Activated B cell treated with CpG ODN at 0.5 μM for 24 hours (primary cell): ENCODE measurements at regions of chr11 and their contacts with region 1.

Region 1: GRCh38 chr11:62427630-62428233 is 8.9 kb downstream of the SCGB1A1 start:
- DNase-seq: no peak
- ATAC-seq: peak; percentile 23
- H3K4me3 Mint-ChIP-seq: peak overlapping the region; percentile 25
- H3K27ac Mint-ChIP-seq: peak overlapping the region; percentile 57
- H3K4me1 Mint-ChIP-seq: peaks cover 24% of the 10 kb centered on the region
- H3K27me3 Mint-ChIP-seq: peaks cover 2% of the 10 kb centered on the region
- CTCF ChIP-seq: no peak

Region 2: DNA sequence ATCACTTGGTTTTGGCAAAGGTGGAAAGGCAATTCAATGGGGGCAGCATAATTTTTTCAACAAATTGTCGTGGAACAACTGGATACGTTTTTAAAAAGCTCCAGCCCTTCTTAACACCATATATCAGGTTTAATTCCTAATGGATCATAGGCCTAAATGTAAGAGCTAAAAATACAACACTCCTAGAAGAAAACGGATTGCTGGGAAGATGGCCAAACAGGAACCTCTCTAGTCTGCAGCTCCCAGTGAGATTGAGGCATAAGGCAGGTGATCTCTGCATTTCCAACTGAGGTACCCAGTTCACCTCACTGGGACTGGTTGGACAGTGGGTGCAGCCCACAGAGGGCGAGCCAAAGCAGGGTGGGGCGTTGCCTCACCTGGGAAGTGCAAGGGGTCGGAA is 270.1 kb before region 1 on chr11:
- CTCF ChIA-PET with region 1: no interaction called
- POLR2A ChIA-PET with region 1: no interaction called
- intact Hi-C with region 1: no loop called
- DNase-seq: no peak
- ATAC-seq: no peak
- H3K4me3 Mint-ChIP-seq: no peak overlapping the region
- H3K27ac Mint-ChIP-seq: no peak overlapping the region
- H3K4me1 Mint-ChIP-seq: no peaks in the 10 kb centered on the region
- H3K27me3 Mint-ChIP-seq: peaks cover 12% of the 10 kb centered on the region
- CTCF ChIP-seq: no peak

Region 3: GRCh38 chr11:62444236-62444833 is 16.6 kb after region 1 on chr11:
- CTCF ChIA-PET with region 1: interaction called, 30 read pairs
- POLR2A ChIA-PET with region 1: interaction called, 9 read pairs
- intact Hi-C with region 1: no loop called
- DNase-seq: peak; percentile 58
- ATAC-seq: peak; percentile 86
- H3K4me3 Mint-ChIP-seq: peak overlapping the region; percentile 83
- H3K27ac Mint-ChIP-seq: peak overlapping the region; percentile 95
- H3K4me1 Mint-ChIP-seq: peaks cover 29% of the 10 kb centered on the region
- H3K27me3 Mint-ChIP-seq: no peaks in the 10 kb centered on the region
- CTCF ChIP-seq: no peak

Region 4: GRCh38 chr11:62508268-62509058 is 80.7 kb after region 1 on chr11:
- CTCF ChIA-PET with region 1: interaction called, 10 read pairs
- POLR2A ChIA-PET with region 1: interaction called, 3 read pairs
- intact Hi-C with region 1: no loop called
- DNase-seq: no peak
- ATAC-seq: peak; percentile 87
- H3K4me3 Mint-ChIP-seq: no peak overlapping the region
- H3K27ac Mint-ChIP-seq: no peak overlapping the region
- H3K4me1 Mint-ChIP-seq: peaks cover 8% of the 10 kb centered on the region
- H3K27me3 Mint-ChIP-seq: peaks cover 1% of the 10 kb centered on the region
- CTCF ChIP-seq: no peak

Region 5: GRCh38 chr11:62612366-62613290 is 184.9 kb after region 1 on chr11 and contains the starts of genes EML3 and ROM1:
- CTCF ChIA-PET with region 1: interaction called, 6 read pairs
- POLR2A ChIA-PET with region 1: no interaction called
- intact Hi-C with region 1: loop called (anchors 2 kb)
- DNase-seq: peak; percentile 95
- ATAC-seq: peak; percentile 82
- H3K4me3 Mint-ChIP-seq: peak within 1 kb of the TSS; percentile 93
- H3K27ac Mint-ChIP-seq: peak within 1 kb of the TSS; percentile 95
- H3K4me1 Mint-ChIP-seq: peaks cover 27% of the 10 kb centered on the region
- H3K27me3 Mint-ChIP-seq: no peaks in the 10 kb centered on the region
- CTCF ChIP-seq: peak; percentile 59
- total RNA-seq, gene EML3: 115 and 128 TPM in 2 replicates
- total RNA-seq, gene ROM1: 0.89 and 2.6 TPM in 2 replicates

Region 6: GRCh38 chr11:62771144-62772021 is 343.7 kb after region 1 on chr11 and contains the start of gene TAF6L:
- CTCF ChIA-PET with region 1: interaction called, 4 read pairs
- POLR2A ChIA-PET with region 1: no interaction called
- intact Hi-C with region 1: loop called (anchors 10 kb)
- DNase-seq: peak; percentile 81
- ATAC-seq: peak; percentile 88
- H3K4me3 Mint-ChIP-seq: peak within 1 kb of the TSS; percentile 92
- H3K27ac Mint-ChIP-seq: peak within 1 kb of the TSS; percentile 94
- H3K4me1 Mint-ChIP-seq: peaks cover 28% of the 10 kb centered on the region
- H3K27me3 Mint-ChIP-seq: no peaks in the 10 kb centered on the region
- CTCF ChIP-seq: no peak
- total RNA-seq, gene TAF6L: 32.9 and 38.6 TPM in 2 replicates